MCF 10A (cell line): ENCODE measurements at regions of chr17 and their contacts with region 1.

Region 1: GRCh38 chr17:45852535-45853297 is 8.0 kb downstream of the SPPL2C start:
- DNase-seq: peak; percentile 73
- H3K4me3 Mint-ChIP-seq: no peak overlapping the region
- H3K27ac Mint-ChIP-seq: no peak overlapping the region
- H3K4me1 Mint-ChIP-seq: no peaks in the 10 kb centered on the region
- H3K27me3 Mint-ChIP-seq: peaks cover 34% of the 10 kb centered on the region
- CTCF ChIP-seq: peak; percentile 87

Region 2: DNA sequence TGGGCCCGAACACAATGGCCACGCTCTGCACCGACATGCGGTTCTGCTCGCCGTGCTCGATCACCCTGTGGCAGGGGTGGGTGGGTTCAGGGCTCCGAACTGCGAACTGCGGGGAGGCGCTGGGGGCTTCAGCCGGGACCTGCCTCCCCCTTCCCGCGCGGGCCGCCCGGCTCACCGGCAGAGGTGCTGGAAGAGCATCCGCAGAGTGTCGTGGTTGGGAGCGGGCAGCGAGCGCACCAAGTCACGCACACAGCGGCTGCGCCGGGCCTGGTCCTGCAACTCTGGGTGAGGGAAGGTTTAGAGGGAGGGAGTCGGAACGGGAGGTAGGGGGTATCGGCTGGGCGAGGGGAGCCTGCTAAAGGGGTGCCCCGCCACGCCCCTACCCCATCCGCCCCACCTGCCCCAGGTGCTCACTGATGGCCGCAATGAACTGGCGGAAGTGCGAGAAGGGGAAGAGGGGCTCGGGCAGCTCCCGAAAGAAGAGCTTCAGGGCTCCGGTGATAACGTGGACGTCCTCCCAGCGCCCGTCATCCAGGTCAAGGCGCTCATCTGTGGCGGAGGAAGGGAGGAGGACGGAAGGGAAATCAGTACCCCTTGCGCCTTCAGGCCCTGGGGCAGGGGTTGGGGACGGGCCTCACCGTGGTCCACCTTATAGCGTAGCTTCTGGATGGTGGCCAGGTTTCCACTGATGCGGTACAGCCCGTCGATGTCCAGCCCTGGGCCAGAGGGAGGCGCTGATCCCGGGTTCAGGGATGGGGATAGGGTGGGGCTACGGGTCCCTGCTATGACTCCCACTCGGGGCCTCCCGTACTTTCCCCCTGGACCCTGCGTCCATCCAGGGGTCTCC is 456.9 kb before region 1 on chr17:
- CTCF ChIA-PET with region 1: interaction called, 5 read pairs
- POLR2A ChIA-PET with region 1: interaction called, 3 read pairs
- intact Hi-C with region 1: loop called (anchors 2 kb)
- DNase-seq: no peak
- H3K4me3 Mint-ChIP-seq: no peak overlapping the region
- H3K27ac Mint-ChIP-seq: no peak overlapping the region
- H3K4me1 Mint-ChIP-seq: no peaks in the 10 kb centered on the region
- H3K27me3 Mint-ChIP-seq: no peaks in the 10 kb centered on the region
- CTCF ChIP-seq: no peak

Region 3: DNA sequence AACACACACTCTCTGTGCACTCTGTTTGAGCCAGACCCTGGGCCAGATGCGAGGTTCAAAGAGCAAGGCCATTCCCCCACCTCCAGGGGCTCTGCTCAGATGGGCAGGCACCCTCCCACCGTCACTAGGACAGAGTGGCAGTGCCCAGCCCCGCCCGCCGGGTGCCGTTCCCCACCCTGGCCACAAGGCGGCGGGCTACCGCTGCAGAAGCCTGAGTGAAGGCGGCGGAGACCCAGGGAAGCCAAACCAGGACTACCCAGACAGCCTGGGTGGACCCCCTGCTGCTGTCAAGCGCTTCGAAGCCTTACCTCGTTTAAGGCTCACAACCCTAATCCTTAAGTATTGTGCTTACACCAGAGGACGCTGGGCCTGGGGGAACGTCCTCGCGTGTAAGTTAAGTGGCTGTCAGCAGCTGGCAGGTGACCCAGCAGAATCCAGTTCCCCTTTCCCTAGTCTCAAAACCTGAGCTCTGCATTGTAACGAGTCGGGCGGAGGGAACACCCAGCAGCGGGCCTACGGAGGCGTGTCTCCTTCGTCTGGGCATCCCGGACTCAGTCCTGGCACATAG is 424.6 kb before region 1 on chr17:
- CTCF ChIA-PET with region 1: interaction called, 3 read pairs
- POLR2A ChIA-PET with region 1: no interaction called
- intact Hi-C with region 1: loop called (anchors 5 kb)
- DNase-seq: peak; percentile 69
- H3K4me3 Mint-ChIP-seq: no peak overlapping the region
- H3K27ac Mint-ChIP-seq: peak overlapping the region; percentile 27
- H3K4me1 Mint-ChIP-seq: peaks cover 28% of the 10 kb centered on the region
- H3K27me3 Mint-ChIP-seq: no peaks in the 10 kb centered on the region
- CTCF ChIP-seq: peak; percentile 98

Region 4: GRCh38 chr17:45640141-45640850 is 212.4 kb before region 1 on chr17:
- CTCF ChIA-PET with region 1: interaction called, 44 read pairs
- POLR2A ChIA-PET with region 1: interaction called, 3 read pairs
- intact Hi-C with region 1: loop called (anchors 1 kb)
- DNase-seq: peak; percentile 76
- H3K4me3 Mint-ChIP-seq: no peak overlapping the region
- H3K27ac Mint-ChIP-seq: no peak overlapping the region
- H3K4me1 Mint-ChIP-seq: no peaks in the 10 kb centered on the region
- H3K27me3 Mint-ChIP-seq: peaks cover 4% of the 10 kb centered on the region
- CTCF ChIP-seq: peak; percentile 96

Region 5: GRCh38 chr17:45834471-45835396 is 18.0 kb before region 1 on chr17:
- CTCF ChIA-PET with region 1: interaction called, 18 read pairs
- POLR2A ChIA-PET with region 1: no interaction called
- intact Hi-C with region 1: no loop called
- DNase-seq: peak; percentile 35
- H3K4me3 Mint-ChIP-seq: no peak overlapping the region
- H3K27ac Mint-ChIP-seq: no peak overlapping the region
- H3K4me1 Mint-ChIP-seq: no peaks in the 10 kb centered on the region
- H3K27me3 Mint-ChIP-seq: peaks cover 22% of the 10 kb centered on the region
- CTCF ChIP-seq: no peak

Region 6: GRCh38 chr17:45863857-45864654 is 11.3 kb after region 1 on chr17:
- CTCF ChIA-PET with region 1: interaction called, 11 read pairs
- POLR2A ChIA-PET with region 1: no interaction called
- intact Hi-C with region 1: no loop called
- DNase-seq: no peak
- H3K4me3 Mint-ChIP-seq: no peak overlapping the region
- H3K27ac Mint-ChIP-seq: no peak overlapping the region
- H3K4me1 Mint-ChIP-seq: peaks cover 5% of the 10 kb centered on the region
- H3K27me3 Mint-ChIP-seq: peaks cover 82% of the 10 kb centered on the region
- CTCF ChIP-seq: no peak

Region 7: DNA sequence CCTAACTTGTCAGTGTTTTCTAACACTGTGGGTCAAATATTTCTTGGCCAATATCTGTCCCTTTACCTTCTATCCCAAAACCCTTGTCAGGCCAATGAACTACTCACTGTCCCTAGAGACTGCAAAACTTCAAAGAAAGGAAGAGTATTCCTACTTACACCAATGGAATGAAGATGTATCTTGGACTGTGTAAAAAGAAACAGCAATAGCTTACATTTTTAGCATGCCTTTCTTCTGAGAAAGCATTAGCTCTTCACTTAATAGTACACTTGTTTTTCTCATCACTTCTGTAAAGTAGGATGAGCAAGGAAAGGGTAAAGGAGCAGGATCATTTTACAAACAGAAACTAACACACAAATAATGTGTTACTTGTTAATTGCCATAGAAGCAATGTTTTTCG is 220.3 kb after region 1 on chr17:
- CTCF ChIA-PET with region 1: no interaction called
- POLR2A ChIA-PET with region 1: no interaction called
- intact Hi-C with region 1: no loop called
- DNase-seq: no peak
- H3K4me3 Mint-ChIP-seq: no peak overlapping the region
- H3K27ac Mint-ChIP-seq: no peak overlapping the region
- H3K4me1 Mint-ChIP-seq: peaks cover 14% of the 10 kb centered on the region
- H3K27me3 Mint-ChIP-seq: no peaks in the 10 kb centered on the region
- CTCF ChIP-seq: no peak